Transverse colon (tissue), 4 donors: ENCODE measurements at regions of chr2 and their contacts with region 1.

Region 1: GRCh38 chr2:237315170-237315828 is 98.7 kb downstream of the COL6A3 start:
- DNase-seq: peak; percentile 76
- H3K4me3 ChIP-seq: no peak overlapping the region
- H3K27ac ChIP-seq: peak overlapping the region; percentile 86 to 92 (median 90)
- H3K4me1 ChIP-seq: peaks cover 10 to 37% (median 27%) of the 10 kb centered on the region in 4 donors
- H3K27me3 ChIP-seq: no peaks in the 10 kb centered on the region
- CTCF ChIP-seq: peak in 2 of 5 experiments; percentile 17 to 25
- EP300 ChIP-seq: peak; percentile 74
- POLR2A ChIP-seq: peak; percentile 13

Region 2: DNA sequence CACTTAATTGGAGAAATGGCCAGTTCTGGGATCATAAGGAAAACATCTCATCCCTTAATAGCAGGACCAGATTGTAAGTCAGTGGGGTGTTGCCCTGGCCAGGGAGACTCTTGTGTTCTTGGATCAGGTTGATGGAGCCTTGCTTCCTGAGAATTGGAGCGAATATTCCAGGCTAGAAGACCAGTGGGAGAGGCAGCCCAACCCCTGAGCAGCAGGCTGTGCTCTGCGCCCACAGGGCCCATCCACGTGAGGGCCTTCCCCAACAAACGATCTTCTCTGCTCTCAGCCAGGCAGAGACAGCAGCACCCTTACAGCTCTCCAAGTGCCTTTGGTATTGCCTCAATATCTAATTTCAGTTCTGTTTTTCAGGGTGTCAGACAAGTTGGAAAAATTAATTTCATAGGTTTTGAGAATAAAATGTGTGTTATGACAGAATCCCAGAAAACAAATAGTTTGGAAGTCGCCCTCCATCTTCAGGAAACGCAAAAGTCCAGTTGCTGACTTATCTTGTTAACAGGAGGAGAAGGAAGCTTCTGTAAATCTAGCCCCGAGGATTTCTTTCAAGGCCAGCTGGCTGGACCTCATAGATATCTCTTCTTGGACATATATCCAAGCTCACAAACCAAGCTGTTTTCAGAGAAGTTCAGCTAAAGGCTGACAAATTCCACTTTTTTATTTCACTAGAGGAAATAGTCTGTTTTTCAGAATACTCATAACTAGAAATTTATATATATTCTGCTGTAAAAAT is 124.2 kb before region 1 on chr2:
- in situ Hi-C with region 1: no loop called
- intact Hi-C with region 1: no loop called
- DNase-seq: no peak
- H3K4me3 ChIP-seq: no peak overlapping the region
- H3K27ac ChIP-seq: peak overlapping the region; percentile 14 to 59 (median 32)
- H3K4me1 ChIP-seq: no peaks in the 10 kb centered on the region
- H3K27me3 ChIP-seq: no peaks in the 10 kb centered on the region
- CTCF ChIP-seq: no peak
- EP300 ChIP-seq: no peak
- POLR2A ChIP-seq: no peak

Region 3: GRCh38 chr2:237291138-237291792 is 24.0 kb before region 1 on chr2:
- in situ Hi-C with region 1: no loop called
- intact Hi-C with region 1: loop called (anchors 2 kb)
- DNase-seq: peak; percentile 87
- H3K4me3 ChIP-seq: no peak overlapping the region
- H3K27ac ChIP-seq: peak overlapping the region; percentile 78 to 87 (median 83)
- H3K4me1 ChIP-seq: peaks cover 18 to 29% (median 22%) of the 10 kb centered on the region in 4 donors
- H3K27me3 ChIP-seq: peaks cover 6% of the 10 kb centered on the region
- CTCF ChIP-seq: no peak
- EP300 ChIP-seq: peak; percentile 83
- POLR2A ChIP-seq: no peak

Region 4: DNA sequence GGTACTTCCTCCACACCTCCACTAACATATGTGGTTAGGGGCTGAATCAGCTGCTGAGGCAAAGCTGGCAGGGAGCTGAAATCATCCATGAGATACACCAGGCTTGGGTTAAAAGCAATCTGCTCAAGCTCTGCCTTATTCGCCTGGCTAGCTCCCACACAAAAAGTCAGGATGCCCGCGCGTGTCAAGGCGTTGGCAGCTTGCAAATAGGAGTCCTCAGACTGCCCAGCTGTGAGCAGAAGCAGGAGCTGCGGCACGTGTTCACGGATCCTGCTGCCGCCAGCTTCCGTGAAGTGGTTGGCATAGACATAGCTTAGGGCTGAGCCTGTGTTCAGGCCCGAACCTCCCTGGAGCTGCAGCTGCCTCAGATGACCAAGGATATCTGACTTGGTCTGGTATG is 63.4 kb after region 1 on chr2:
- in situ Hi-C with region 1: no loop called
- intact Hi-C with region 1: loop called (anchors 5 kb)
- DNase-seq: peak; percentile 49
- H3K4me3 ChIP-seq: no peak overlapping the region
- H3K27ac ChIP-seq: peak overlapping the region; percentile 25 to 63 (median 48)
- H3K4me1 ChIP-seq: no peaks in the 10 kb centered on the region
- H3K27me3 ChIP-seq: no peaks in the 10 kb centered on the region
- CTCF ChIP-seq: no peak
- EP300 ChIP-seq: peak; percentile 29
- POLR2A ChIP-seq: no peak